ENCODE measurements at regions of chr10 and their contacts with region 1.

Region 1: DNA sequence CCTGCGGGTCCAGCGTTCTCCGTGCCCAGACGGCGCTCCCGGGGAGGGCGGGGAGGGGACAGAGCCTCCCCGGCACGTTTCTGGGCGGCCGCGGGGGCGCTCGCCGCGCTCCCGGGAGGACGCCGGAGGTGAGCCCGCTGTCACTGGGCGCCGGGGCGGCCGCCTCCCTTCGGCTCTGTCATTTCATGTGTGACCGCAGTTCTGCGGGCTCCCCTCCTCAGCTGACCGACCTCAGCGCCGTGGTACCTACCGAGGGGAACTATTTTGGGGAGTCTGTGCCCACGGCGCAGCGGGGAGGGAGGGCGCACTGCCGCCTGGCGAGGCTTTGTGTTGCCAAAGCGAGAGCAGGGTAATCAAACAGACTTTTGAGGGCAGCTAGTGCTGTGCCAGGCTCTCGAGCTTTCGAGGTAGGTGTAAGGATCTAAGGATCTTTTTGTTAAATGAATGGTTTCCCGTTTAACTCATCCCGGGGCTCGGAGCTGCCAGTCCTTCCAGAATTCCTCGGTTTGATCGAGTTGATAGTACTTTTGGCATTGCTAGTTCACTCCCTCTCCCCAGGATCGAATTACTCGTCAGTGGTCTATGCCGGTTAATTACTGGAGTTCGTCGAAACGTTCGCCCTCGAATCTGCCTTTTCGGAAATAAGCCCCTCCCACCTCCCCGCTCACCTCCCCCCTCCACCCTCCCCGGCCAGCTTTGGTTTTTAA is 1.9 kb downstream of the ARID5B start:
- DNase-seq: peak; percentile 68
- H3K4me3 Mint-ChIP-seq: peak overlapping the region; percentile 90
- H3K27ac Mint-ChIP-seq: peak overlapping the region; percentile 100
- H3K4me1 Mint-ChIP-seq: peaks cover 16% of the 10 kb centered on the region
- H3K27me3 Mint-ChIP-seq: no peaks in the 10 kb centered on the region
- CTCF ChIP-seq: peak; percentile 22

Region 2: DNA sequence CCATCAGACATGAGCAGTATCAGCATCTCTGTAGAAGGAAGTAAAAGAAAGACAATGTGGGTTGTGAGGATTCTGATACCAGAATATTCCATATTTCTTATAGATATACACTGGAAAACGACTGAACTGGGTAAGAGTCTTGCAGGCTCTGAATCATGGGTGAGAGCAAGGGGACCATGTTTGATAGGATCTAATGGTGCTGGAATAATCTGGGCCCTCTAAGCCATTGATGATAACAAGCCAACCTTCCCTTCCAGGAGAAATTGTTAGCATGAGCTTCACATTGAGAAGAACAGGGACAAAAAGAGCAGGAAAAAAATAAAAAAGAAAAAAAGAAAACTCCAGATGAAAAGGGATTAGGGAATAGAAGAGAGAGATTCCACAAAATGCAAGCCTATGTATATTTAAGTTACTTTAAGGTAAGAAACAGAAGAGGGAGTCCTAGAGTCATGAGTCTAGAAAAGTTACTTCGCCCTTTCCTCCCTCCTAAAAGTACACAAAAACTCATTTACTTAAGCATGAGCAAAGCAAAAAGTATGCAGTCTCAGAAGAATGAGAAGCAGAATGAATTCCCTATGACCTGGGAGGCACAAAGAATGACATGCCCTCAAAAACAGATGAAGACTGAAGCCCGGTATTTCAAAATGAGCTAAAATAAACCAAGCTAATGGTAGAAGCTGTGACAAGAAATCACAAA is 632.1 kb before region 1 on chr10:
- CTCF ChIA-PET with region 1: no interaction called
- POLR2A ChIA-PET with region 1: interaction called, 5 read pairs
- intact Hi-C with region 1: loop called (anchors 10 kb)
- DNase-seq: peak; percentile 47
- H3K4me3 Mint-ChIP-seq: no peak overlapping the region
- H3K27ac Mint-ChIP-seq: peak overlapping the region; percentile 39
- H3K4me1 Mint-ChIP-seq: peaks cover 10% of the 10 kb centered on the region
- H3K27me3 Mint-ChIP-seq: no peaks in the 10 kb centered on the region
- CTCF ChIP-seq: peak; percentile 27

Region 3: DNA sequence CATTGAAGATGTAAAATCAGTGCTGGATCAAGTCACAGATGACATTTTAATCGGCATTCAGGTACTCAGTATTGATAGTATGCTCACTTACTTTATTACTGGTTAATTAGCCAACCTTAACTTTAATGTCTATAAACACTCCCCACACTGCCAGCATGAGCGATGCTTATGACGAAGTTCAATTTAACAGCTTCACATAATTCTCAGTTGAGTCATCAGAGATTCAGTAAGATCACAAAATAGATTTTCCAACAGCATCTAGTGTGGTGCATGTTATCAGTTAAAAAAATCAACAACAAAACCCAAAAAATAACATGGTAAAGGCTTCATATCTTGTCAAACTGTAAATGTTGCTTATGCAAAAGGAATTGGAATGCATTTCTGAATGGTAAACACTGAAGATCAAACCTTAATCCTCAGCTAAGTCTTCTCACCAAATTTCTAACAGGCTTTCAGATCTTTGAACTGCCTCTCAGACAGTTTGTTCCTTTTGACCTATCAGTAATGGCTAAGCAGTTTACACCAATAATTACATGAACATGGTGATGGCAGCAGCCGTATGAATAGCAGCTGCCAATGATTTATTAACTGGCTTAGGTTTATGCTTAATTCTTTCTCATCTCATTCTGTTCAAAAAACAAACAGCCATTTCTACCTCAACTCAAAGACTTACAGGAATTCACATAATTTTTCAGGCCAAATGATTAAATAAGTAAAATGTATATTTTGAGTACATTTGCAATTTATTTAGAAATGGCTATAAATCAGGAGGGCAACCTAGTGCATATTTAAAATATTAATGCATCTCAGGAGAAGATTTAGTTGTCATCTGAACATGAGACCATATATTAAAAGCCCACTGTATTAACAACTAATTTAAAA is 142.2 kb before region 1 on chr10:
- CTCF ChIA-PET with region 1: interaction called, 3 read pairs
- POLR2A ChIA-PET with region 1: interaction called, 13 read pairs
- intact Hi-C with region 1: no loop called
- DNase-seq: peak; percentile 47
- H3K4me3 Mint-ChIP-seq: no peak overlapping the region
- H3K27ac Mint-ChIP-seq: peak overlapping the region; percentile 75
- H3K4me1 Mint-ChIP-seq: peaks cover 28% of the 10 kb centered on the region
- H3K27me3 Mint-ChIP-seq: no peaks in the 10 kb centered on the region
- CTCF ChIP-seq: no peak

Region 4: DNA sequence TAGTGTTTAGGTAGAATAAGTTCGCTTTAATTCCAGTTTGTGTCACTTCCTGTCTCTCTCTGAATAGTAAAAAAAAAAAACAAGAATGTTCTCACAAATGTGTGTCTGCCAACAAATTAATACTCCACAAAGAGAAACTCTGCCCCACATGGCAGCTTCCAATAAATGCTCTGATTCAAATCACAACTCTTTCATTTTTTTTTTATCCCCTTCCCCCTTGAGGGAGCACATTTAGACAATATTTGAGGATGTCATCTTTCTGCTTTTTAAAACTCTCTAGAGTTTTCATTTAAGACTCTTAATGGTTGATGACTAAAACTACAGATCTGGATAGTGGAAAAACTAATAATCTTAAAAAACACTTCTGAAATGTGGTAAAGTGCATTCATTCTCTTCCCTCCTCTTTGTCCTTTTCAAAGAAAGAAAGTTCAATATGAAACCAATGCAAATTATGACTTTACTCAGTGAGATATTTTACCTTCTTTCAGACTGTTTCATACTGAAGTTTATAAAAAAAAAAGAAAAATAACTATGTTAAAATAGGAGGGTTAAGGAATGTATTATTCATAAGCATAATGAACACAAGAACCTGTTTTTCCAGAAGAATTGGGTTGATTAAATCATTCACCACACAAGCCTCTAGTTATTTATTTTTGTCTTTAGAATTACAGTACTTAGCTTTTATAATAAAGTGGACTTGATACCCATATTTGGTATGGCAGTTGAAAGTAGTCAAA is 40.5 kb after region 1 on chr10:
- CTCF ChIA-PET with region 1: interaction called, 6 read pairs
- POLR2A ChIA-PET with region 1: interaction called, 135 read pairs
- intact Hi-C with region 1: loop called (anchors 2 kb)
- DNase-seq: peak; percentile 51
- H3K4me3 Mint-ChIP-seq: peak overlapping the region; percentile 68
- H3K27ac Mint-ChIP-seq: peak overlapping the region; percentile 97
- H3K4me1 Mint-ChIP-seq: peaks cover 19% of the 10 kb centered on the region
- H3K27me3 Mint-ChIP-seq: no peaks in the 10 kb centered on the region
- CTCF ChIP-seq: no peak

Region 5: GRCh38 chr10:62025901-62026879 is 122.8 kb after region 1 on chr10:
- CTCF ChIA-PET with region 1: interaction called, 6 read pairs
- POLR2A ChIA-PET with region 1: interaction called, 111 read pairs
- intact Hi-C with region 1: no loop called
- DNase-seq: no peak
- H3K4me3 Mint-ChIP-seq: no peak overlapping the region
- H3K27ac Mint-ChIP-seq: peak overlapping the region; percentile 72
- H3K4me1 Mint-ChIP-seq: peaks cover 39% of the 10 kb centered on the region
- H3K27me3 Mint-ChIP-seq: no peaks in the 10 kb centered on the region
- CTCF ChIP-seq: no peak

Region 6: GRCh38 chr10:62095181-62096071 is 192.1 kb after region 1 on chr10:
- CTCF ChIA-PET with region 1: interaction called, 3 read pairs
- POLR2A ChIA-PET with region 1: interaction called, 5 read pairs
- intact Hi-C with region 1: loop called (anchors 5 kb)
- DNase-seq: peak; percentile 81
- H3K4me3 Mint-ChIP-seq: peak overlapping the region; percentile 58
- H3K27ac Mint-ChIP-seq: peak overlapping the region; percentile 98
- H3K4me1 Mint-ChIP-seq: peaks cover 57% of the 10 kb centered on the region
- H3K27me3 Mint-ChIP-seq: no peaks in the 10 kb centered on the region
- CTCF ChIP-seq: no peak